Aorta (tissue), 5 donors: ENCODE measurements at regions of chr2 and their contacts with region 1.

Region 1: DNA sequence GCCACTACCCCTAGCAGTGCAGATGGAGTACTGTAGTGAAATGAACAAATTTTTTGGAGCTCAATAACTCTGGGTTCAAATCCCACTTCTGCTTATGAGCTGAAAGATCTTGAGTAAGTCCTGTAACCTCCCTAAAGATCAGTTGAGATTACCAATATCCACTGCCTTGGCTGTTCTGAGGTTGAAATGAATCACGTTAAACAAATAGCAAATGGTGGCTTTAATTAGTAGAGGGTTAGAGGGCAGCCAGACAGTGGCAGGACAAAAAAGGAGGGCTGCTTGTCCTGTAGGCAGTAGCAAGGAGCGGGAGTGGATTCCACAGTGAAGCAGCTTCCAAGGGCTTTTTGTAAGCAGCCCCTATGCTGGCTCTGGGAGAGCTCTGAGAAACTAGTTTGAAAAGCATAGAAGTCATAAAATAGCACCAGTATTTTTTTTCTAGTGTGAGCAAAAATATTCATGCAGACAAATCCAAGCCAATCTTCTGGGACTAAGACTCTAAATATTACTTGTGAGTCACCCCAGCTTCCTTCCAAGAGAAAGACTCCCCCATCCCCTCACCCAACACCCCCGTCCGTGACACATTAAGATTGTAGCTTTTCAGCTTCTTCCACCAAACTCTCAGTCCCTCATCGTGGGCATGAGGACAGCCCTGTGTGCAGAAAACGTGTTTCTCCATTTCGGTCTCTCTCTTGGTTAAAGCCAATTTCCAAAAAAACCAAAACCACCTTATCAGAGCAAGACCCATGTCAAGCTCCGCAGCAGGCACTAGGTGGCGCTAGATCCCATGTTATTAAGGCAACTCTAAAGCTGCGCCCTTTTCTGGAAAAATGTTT is 123.5 kb upstream of the LGALSL start:
- DNase-seq: peak; percentile 89 to 91
- ATAC-seq: peak; percentile 93
- H3K4me3 ChIP-seq: no peak overlapping the region
- H3K27ac ChIP-seq: peak overlapping the region; percentile 96 to 98
- H3K4me1 ChIP-seq: no peaks in the 10 kb centered on the region
- H3K27me3 ChIP-seq: no peaks in the 10 kb centered on the region

Region 2: DNA sequence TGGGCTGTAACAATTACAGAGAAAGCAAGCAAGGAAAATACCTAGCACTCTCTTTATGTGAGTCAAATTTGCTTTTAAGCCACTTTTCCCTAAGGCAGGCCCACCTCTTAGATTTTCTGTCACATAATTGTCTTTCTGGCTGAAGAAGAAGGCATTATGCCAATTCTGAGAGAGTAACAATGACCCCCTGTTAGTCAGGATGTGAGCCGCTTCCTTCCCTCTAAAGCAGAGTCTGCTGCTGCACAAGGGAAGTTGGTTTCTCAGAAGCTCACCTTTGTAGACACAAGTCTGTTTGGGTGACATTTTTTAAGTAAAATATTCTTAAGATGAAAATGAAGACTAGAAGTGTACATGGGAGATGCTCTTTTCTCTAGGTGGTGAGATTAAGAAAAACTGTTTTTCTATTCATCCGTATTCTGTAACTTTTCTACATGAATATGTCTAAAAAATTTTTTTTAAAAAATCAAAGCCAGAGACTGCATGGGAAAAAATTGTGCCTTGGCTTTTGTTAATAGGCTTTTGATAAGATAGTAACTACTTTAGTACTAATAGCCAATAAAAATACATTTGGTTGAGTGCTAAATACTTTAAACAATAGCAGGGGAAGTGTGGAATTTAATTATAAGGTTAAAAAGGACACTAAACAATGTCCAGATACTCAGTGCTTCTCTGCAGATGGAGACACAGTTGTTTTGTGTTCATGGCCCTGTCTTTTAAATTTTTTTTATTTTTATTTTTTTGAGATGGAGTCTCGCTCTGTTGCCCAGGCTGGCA is 277.8 kb before region 1 on chr2:
- intact Hi-C with region 1: loop called (anchors 1 to 2 kb)
- DNase-seq: no peak
- ATAC-seq: no peak
- H3K4me3 ChIP-seq: no peak overlapping the region
- H3K27ac ChIP-seq: no peak overlapping the region
- H3K4me1 ChIP-seq: no peaks in the 10 kb centered on the region
- H3K27me3 ChIP-seq: no peaks in the 10 kb centered on the region

Region 3: GRCh38 chr2:64453770-64454385 is 123.4 kb after region 1 on chr2 and contains the start of gene LGALSL:
- intact Hi-C with region 1: loop called (anchors 1 to 2 kb)
- DNase-seq: peak; percentile 86 to 92
- ATAC-seq: peak; percentile 90
- H3K4me3 ChIP-seq: peak within 1 kb of the TSS; percentile 57 to 85
- H3K27ac ChIP-seq: peak within 1 kb of the TSS; percentile 97 to 100
- H3K4me1 ChIP-seq: no peaks in the 10 kb centered on the region
- H3K27me3 ChIP-seq: no peaks in the 10 kb centered on the region
- total RNA-seq, gene LGALSL: 18.5 to 26.8 TPM

Region 4: GRCh38 chr2:64523666-64524603 is 193.4 kb after region 1 on chr2 and contains the start of gene AFTPH:
- intact Hi-C with region 1: loop called in 1 of 2 experiments (anchors 1 kb)
- DNase-seq: peak; percentile 99 to 100
- ATAC-seq: peak; percentile 99
- H3K4me3 ChIP-seq: peak within 1 kb of the TSS; percentile 83 to 86
- H3K27ac ChIP-seq: peak within 1 kb of the TSS; percentile 20 to 79
- H3K4me1 ChIP-seq: no peaks in the 10 kb centered on the region
- H3K27me3 ChIP-seq: no peaks in the 10 kb centered on the region
- total RNA-seq, gene AFTPH: 28.3 to 30.6 TPM

Region 5: DNA sequence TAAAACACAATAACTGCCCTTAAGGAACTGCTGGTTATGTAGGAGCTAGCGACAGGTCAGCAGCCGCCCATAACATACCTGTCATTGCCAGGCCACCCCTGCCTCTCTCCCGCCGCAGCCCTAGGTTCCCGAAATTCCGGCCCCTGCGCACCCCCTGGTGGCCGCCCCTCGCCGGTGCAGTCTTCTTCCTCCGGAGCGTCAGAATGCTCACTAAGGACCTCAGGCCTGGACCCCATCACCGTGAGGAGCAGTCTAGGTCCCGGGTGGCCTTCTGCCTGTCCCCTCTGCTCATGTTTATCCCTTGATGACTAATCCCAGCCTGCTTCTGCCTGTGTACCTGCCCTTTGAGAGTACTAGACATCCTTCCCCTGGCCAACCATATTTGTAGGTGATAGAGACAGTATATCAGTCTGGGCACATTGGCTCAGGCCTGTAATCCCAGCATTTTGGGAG is 543.0 kb after region 1 on chr2:
- intact Hi-C with region 1: loop called in 1 of 2 experiments (anchors 10 kb)
- DNase-seq: peak; percentile 82 to 95
- ATAC-seq: peak; percentile 85
- H3K4me3 ChIP-seq: no peak overlapping the region
- H3K27ac ChIP-seq: no peak overlapping the region
- H3K4me1 ChIP-seq: no peaks in the 10 kb centered on the region
- H3K27me3 ChIP-seq: no peaks in the 10 kb centered on the region

Region 6: GRCh38 chr2:64922482-64923384 is 592.2 kb after region 1 on chr2:
- intact Hi-C with region 1: no loop called
- DNase-seq: no peak
- ATAC-seq: no peak
- H3K4me3 ChIP-seq: no peak overlapping the region
- H3K27ac ChIP-seq: no peak overlapping the region
- H3K4me1 ChIP-seq: no peaks in the 10 kb centered on the region
- H3K27me3 ChIP-seq: no peaks in the 10 kb centered on the region